Endothelial cell of umbilical vein (primary cell): ENCODE measurements at regions of chr9 and their contacts with region 1.

Region 1: GRCh38 chr9:114246558-114246957 is 76.3 kb upstream of the ORM1 start:
- DNase-seq: no peak
- H3K4me3 ChIP-seq: no peak overlapping the region
- H3K27ac ChIP-seq: no peak overlapping the region
- H3K4me1 ChIP-seq: no peaks in the 10 kb centered on the region
- H3K27me3 ChIP-seq: no peaks in the 10 kb centered on the region
- CTCF ChIP-seq: no peak
- POLR2A ChIP-seq: no peak

Region 2: DNA sequence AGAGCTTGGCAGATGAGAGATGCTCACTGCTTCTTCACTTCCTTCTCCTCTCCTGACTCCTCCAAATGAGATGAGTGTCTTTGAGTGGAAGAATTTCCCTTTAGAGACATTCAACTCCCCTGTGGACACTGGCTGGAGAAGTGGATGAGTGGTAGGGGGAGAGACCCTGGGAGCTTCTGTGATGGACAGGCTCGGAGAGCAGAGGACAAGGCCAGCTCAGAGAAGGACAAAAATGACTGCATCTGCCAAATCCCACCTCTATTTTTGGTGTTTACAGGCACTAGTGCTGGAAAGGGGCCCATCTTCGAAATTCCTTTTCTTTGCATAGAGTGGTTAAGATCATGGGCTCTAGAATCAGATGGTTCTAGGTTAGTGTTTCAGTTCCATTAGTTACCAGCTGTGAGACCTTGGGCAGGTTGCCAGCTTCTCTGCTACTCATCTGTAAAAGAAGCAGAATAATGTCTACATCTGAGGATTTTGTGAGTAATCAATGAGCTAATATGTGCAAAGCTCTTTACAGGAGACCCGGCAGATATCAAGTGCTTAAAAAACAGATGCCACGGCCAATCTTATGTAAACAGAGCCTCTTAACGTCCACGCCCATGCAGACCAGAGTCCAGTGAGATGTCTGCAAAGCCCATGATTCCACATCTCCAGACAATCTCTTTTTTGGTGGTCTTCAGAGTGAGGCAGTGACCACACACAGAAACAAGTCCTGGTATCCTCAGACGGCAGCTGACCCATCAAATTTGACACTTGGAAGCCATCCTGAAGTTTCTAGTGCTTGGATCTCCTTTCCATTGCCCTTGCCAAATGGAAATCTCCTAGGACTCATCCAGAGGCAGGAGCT is 104.8 kb before region 1 on chr9:
- CTCF ChIA-PET with region 1: interaction called, 3 read pairs
- POLR2A ChIA-PET with region 1: interaction called, 11 read pairs
- dilution Hi-C with region 1: no loop called
- intact Hi-C with region 1: no loop called
- DNase-seq: no peak
- H3K4me3 ChIP-seq: no peak overlapping the region
- H3K27ac ChIP-seq: no peak overlapping the region
- H3K4me1 ChIP-seq: no peaks in the 10 kb centered on the region
- H3K27me3 ChIP-seq: peaks cover 26 to 33% of the 10 kb centered on the region in 2 experiments
- CTCF ChIP-seq: no peak
- POLR2A ChIP-seq: no peak